ENCODE measurements at regions of chr4 and their contacts with region 1.

Region 1: DNA sequence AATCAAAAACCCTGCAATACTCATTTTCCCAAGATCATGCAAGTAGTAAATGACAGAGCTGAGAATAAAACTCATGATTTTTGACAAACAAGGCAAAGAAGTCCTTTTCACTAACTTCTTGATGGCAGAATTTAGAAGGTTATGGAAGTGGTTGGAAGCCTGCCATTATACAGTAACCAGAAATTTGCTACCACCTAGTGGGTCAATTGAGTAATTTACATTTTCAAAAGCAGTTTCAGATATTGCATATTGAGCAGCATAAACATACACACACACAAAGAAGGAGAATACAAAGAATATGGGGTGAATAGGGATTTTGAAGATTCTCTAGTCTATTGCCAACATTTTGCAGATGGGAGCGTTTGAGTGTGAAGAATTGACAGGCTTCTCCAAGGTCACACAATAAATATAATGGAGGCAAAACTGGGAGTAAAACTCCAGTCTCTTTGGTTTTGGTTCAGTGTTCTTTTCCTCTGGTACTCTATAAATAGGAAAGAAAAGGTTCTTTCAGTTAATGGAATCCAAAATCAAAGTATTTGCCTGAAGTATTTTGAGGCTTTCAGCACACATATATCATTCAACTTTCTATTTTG is 70.2 kb downstream of the GC start:
- DNase-seq: peak; percentile 59
- H3K4me3 ChIP-seq: no peak overlapping the region
- H3K27ac ChIP-seq: no peak overlapping the region
- H3K27me3 ChIP-seq: peaks cover 2% of the 10 kb centered on the region
- CTCF ChIP-seq: peak; percentile 64

Region 2: GRCh38 chr4:71050809-71051208 is 662.9 kb before region 1 on chr4:
- CTCF ChIA-PET with region 1: interaction called, 17 read pairs
- POLR2A ChIA-PET with region 1: no interaction called
- DNase-seq: no peak
- H3K4me3 ChIP-seq: no peak overlapping the region
- H3K27ac ChIP-seq: no peak overlapping the region
- H3K27me3 ChIP-seq: no peaks in the 10 kb centered on the region
- CTCF ChIP-seq: peak; percentile 15; the same call in 1 of the 2 replicates

Region 3: DNA sequence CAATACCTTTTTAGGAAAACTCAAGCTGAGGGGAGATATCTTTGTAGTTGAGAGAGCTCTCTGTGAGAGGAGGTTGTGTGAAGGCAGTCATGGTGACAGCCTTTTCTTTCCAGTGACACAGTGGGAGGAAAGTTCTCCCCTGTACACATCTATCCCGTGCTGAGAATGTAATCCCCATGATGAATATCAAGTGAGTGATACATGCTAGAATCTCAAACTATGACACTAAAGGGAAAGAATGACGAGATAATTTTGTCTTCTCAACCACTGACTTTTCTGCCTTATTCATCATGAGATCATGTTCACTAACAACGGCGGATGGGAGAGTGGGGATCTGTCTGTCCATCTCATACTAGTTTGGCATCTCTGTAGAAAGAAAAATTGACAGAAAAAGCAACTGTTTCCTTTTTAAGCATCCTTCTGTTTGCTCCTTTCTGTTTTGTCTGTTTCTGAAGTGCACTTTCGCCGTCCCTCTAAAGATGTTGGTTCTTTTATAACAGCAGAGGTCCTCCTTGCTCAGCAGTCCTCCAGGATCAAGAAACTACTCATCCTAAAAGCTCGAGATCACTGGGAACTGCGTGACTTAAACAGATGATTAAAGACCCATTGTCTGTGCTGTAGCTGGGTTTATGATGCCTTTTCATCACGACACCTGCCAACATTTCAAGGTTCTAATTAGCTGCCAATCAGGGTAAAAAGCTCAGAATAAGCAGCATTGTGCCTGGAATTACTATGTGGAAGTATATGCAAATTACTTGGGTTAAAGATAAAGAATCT is 582.7 kb before region 1 on chr4:
- CTCF ChIA-PET with region 1: interaction called, 25 read pairs
- POLR2A ChIA-PET with region 1: no interaction called
- DNase-seq: no peak
- H3K4me3 ChIP-seq: peak overlapping the region; percentile 23
- H3K27ac ChIP-seq: peak overlapping the region; percentile 43
- H3K27me3 ChIP-seq: no peaks in the 10 kb centered on the region
- CTCF ChIP-seq: peak; percentile 41; the same call in 1 of the 2 replicates

Measured in AG04450 (cell line).